Activated CD8-positive, alpha-beta T cell treated with anti-CD3 and anti-CD28 coated beads for 36 hours (primary cell): ENCODE measurements at regions of chr6 and their contacts with region 1.

Region 1: GRCh38 chr6:132279592-132280139 is 121.6 kb downstream of the MOXD1 start:
- DNase-seq: peak; percentile 79
- ATAC-seq: peak; percentile 88
- H3K4me3 Mint-ChIP-seq: peak overlapping the region; percentile 64
- H3K27ac Mint-ChIP-seq: no peak overlapping the region
- H3K4me1 Mint-ChIP-seq: no peaks in the 10 kb centered on the region
- H3K27me3 Mint-ChIP-seq: peaks cover 23% of the 10 kb centered on the region
- CTCF ChIP-seq: peak; percentile 98

Region 2: GRCh38 chr6:132253211-132253610 is 26.5 kb before region 1 on chr6:
- CTCF ChIA-PET with region 1: interaction called, 17 read pairs
- POLR2A ChIA-PET with region 1: no interaction called
- intact Hi-C with region 1: no loop called
- DNase-seq: no peak
- ATAC-seq: no peak
- H3K4me3 Mint-ChIP-seq: no peak overlapping the region
- H3K27ac Mint-ChIP-seq: no peak overlapping the region
- H3K4me1 Mint-ChIP-seq: no peaks in the 10 kb centered on the region
- H3K27me3 Mint-ChIP-seq: peaks cover 12% of the 10 kb centered on the region
- CTCF ChIP-seq: no peak

Region 3: DNA sequence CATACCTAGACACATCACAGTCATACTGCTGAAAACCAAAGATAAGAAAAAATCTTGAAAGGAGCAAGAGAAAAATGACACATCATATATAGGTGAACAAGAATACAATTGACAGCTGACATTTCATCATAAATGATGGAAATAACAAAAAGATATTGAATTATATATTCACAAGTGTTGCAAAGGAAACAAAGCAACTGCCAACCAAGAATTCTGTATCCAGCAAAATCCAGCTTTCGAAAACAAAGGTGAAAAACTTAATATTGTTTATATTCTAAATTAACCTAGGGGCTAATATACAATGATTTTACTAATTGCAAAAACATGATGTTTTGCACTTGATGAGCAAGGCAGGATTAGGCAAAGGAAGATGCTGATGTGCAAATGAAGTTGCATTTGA is 37.3 kb after region 1 on chr6:
- CTCF ChIA-PET with region 1: interaction called, 13 read pairs
- POLR2A ChIA-PET with region 1: no interaction called
- intact Hi-C with region 1: no loop called
- DNase-seq: no peak
- ATAC-seq: no peak
- H3K4me3 Mint-ChIP-seq: no peak overlapping the region
- H3K27ac Mint-ChIP-seq: no peak overlapping the region
- H3K4me1 Mint-ChIP-seq: no peaks in the 10 kb centered on the region
- H3K27me3 Mint-ChIP-seq: no peaks in the 10 kb centered on the region
- CTCF ChIP-seq: no peak

Region 4: DNA sequence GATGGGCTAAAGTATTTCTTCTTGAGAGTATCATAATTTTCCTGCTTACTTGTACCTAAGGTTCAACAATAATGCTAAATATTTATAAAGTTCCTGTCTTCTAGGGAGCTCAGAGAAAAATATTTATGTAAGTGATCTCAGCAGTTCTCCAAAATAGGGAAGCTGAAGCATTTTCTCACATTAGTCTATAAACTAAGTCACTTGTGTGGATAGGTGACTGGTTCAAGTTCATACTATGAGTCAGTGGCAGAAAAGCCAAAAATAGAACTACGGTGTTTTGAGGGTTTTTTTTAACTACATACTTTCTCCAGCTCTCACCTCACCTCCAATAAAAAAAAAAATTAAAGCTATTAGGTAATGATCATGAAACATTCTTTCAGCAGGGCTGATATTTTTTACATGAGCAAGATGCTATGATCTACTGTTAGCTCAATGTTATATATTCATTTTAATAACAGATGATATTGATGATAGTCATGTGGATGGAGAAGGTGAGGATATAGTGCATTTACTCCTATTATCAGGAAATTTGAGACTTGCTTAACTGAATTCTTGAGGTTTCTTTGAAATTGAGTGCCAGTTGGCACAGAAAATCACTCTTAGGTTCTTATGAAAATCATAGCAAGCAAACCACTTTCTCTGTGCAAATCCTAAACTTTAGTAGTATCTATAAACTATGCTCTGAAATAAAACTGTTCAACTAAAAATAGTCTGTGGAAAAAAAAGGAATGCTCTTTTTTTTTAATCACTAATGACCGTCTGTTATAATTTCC is 125.7 kb after region 1 on chr6:
- CTCF ChIA-PET with region 1: interaction called, 12 read pairs
- POLR2A ChIA-PET with region 1: no interaction called
- intact Hi-C with region 1: no loop called
- DNase-seq: no peak
- ATAC-seq: no peak
- H3K4me3 Mint-ChIP-seq: no peak overlapping the region
- H3K27ac Mint-ChIP-seq: no peak overlapping the region
- H3K4me1 Mint-ChIP-seq: peaks cover 17% of the 10 kb centered on the region
- H3K27me3 Mint-ChIP-seq: peaks cover 43% of the 10 kb centered on the region
- CTCF ChIP-seq: no peak

Region 5: GRCh38 chr6:132471788-132472187 is 192.1 kb after region 1 on chr6:
- CTCF ChIA-PET with region 1: interaction called, 41 read pairs
- POLR2A ChIA-PET with region 1: no interaction called
- intact Hi-C with region 1: no loop called
- DNase-seq: no peak
- ATAC-seq: no peak
- H3K4me3 Mint-ChIP-seq: no peak overlapping the region
- H3K27ac Mint-ChIP-seq: no peak overlapping the region
- H3K4me1 Mint-ChIP-seq: no peaks in the 10 kb centered on the region
- H3K27me3 Mint-ChIP-seq: no peaks in the 10 kb centered on the region
- CTCF ChIP-seq: no peak

Region 6: GRCh38 chr6:132512638-132513632 is 233.3 kb after region 1 on chr6 and contains the start of gene STX7:
- CTCF ChIA-PET with region 1: interaction called, 21 read pairs
- POLR2A ChIA-PET with region 1: no interaction called
- intact Hi-C with region 1: no loop called
- DNase-seq: peak; percentile 86
- ATAC-seq: peak; percentile 97
- H3K4me3 Mint-ChIP-seq: peak within 1 kb of the TSS; percentile 89
- H3K27ac Mint-ChIP-seq: peak within 1 kb of the TSS; percentile 87
- H3K4me1 Mint-ChIP-seq: peaks cover 26% of the 10 kb centered on the region
- H3K27me3 Mint-ChIP-seq: peaks cover 1% of the 10 kb centered on the region
- CTCF ChIP-seq: no peak
- total RNA-seq, gene STX7: 11.8 to 15.1 TPM

Region 7: GRCh38 chr6:132708002-132708401 is 428.3 kb after region 1 on chr6:
- CTCF ChIA-PET with region 1: no interaction called
- POLR2A ChIA-PET with region 1: no interaction called
- intact Hi-C with region 1: no loop called
- DNase-seq: no peak
- ATAC-seq: no peak
- H3K4me3 Mint-ChIP-seq: no peak overlapping the region
- H3K27ac Mint-ChIP-seq: no peak overlapping the region
- H3K4me1 Mint-ChIP-seq: no peaks in the 10 kb centered on the region
- H3K27me3 Mint-ChIP-seq: peaks cover 15% of the 10 kb centered on the region
- CTCF ChIP-seq: no peak